ENCODE measurements at regions of chr2 and their contacts with region 1.

Region 1: DNA sequence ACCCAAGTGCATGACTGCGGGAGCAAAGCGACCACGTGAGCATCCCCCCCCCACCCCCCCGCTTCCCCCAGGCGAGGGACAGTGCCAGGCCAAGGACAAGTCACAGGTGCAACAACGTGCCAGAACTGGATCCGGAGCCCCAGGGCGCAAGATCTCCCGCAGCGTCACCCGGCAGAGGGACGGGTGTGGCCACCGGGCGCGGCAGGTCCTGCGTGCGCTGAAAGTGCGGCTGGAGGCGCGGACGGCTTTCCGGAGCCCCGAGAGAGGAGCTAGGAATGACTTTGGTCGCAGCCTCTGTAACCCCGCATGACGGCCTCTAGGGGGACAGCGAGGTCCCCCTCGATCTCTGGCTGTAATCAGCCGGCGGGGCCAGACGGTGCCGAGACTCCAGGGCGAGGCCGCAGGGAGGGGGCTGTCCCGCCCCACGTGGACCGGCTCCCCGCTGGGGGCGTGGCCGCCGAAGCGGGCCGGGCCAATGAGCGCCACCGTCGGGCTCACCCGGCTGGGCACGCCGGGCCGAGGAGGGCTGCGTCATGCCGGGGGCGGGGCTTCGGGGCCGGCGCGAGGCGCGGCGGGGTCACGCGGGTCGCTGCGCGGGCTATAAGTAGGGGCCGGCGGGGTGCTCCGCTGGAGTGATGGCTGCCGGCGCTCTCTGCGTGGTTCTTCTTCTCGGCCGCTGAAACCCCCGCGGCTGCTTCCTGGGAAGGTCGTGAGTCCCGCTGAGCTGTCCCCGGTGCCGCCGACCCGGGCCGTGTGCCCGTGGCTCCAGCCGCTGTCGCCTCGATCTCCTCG is at the start of gene SLC20A1:
- DNase-seq: peak; percentile 93
- H3K4me3 Mint-ChIP-seq: peak within 1 kb of the TSS; percentile 77
- H3K27ac Mint-ChIP-seq: peak within 1 kb of the TSS; percentile 94
- H3K4me1 Mint-ChIP-seq: peaks cover 48% of the 10 kb centered on the region
- H3K27me3 Mint-ChIP-seq: no peaks in the 10 kb centered on the region
- CTCF ChIP-seq: peak; percentile 37
- total RNA-seq, gene SLC20A1: 242 and 295 TPM in 2 replicates

Region 2: GRCh38 chr2:112542123-112542983 is 103.2 kb before region 1 on chr2 and contains the start of gene POLR1B:
- CTCF ChIA-PET with region 1: interaction called, 3 read pairs
- POLR2A ChIA-PET with region 1: interaction called, 3 read pairs
- intact Hi-C with region 1: loop called (anchors 2 kb)
- DNase-seq: peak; percentile 90
- H3K4me3 Mint-ChIP-seq: no peak within 1 kb of the TSS
- H3K27ac Mint-ChIP-seq: no peak within 1 kb of the TSS
- H3K4me1 Mint-ChIP-seq: peaks cover 11% of the 10 kb centered on the region
- H3K27me3 Mint-ChIP-seq: no peaks in the 10 kb centered on the region
- CTCF ChIP-seq: no peak
- total RNA-seq, gene POLR1B: 51.6 and 74.0 TPM in 2 replicates

Region 3: DNA sequence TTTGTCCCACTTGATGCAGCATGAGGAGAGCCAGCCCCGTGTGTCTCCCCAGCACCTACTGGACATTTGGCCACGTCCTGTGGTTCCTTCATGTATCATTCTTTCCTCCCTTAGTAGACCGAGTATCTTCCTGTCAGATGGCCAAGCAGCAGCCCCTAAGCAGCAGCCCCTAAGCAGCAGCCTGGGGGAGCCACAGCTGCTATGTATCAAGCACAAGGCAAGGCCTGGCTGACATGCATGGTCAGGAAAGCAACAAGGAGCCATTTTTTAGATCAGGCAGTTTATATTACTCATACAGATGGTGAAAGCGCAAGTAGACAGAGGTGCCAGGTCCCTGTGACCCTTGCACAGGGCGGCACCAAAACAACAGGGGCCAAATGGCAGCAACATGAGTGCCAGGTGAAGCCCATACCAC is 39.0 kb before region 1 on chr2:
- CTCF ChIA-PET with region 1: interaction called, 4 read pairs
- POLR2A ChIA-PET with region 1: interaction called, 6 read pairs
- intact Hi-C with region 1: loop called (anchors 2 kb)
- DNase-seq: no peak
- H3K4me3 Mint-ChIP-seq: no peak overlapping the region
- H3K27ac Mint-ChIP-seq: no peak overlapping the region
- H3K4me1 Mint-ChIP-seq: peaks cover 4% of the 10 kb centered on the region
- H3K27me3 Mint-ChIP-seq: no peaks in the 10 kb centered on the region
- CTCF ChIP-seq: no peak

Region 4: DNA sequence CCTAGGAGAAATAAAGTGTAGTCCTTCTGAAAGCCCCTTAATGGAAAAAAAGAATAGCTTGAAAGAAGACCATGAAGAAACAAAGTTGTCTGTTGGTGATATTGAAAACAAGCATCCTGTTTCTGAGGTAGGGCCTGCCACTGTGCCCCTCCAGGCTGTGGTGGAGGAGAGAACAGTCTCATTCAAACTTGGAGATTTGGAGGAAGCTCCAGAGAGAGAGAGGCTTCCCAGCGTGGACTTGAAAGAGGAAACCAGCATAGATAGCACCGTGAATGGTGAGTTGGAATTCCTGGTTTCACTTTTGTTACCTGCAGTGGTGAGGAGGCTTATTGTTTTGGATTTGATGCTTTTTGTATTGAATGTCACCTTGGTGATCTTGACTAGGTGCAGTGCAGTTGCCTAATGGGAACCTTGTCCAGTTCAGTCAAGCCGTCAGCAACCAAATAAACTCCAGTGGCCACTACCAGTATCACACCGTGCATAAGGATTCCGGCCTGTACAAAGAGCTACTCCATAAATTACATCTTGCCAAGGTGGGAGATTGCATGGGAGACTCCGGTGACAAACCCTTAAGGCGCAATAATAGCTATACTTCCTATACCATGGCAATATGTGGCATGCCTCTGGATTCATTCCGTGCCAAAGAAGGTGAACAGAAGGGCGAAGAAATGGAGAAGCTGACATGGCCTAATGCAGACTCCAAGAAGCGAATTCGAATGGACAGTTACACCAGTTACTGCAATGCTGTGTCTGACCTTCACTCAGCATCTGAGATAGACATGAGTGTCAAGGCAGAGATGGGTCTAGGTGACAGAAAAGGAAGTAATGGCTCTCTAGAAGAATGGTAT is 13.5 kb after region 1 on chr2:
- CTCF ChIA-PET with region 1: interaction called, 5 read pairs
- POLR2A ChIA-PET with region 1: interaction called, 77 read pairs
- intact Hi-C with region 1: no loop called
- DNase-seq: peak; percentile 49
- H3K4me3 Mint-ChIP-seq: no peak overlapping the region
- H3K27ac Mint-ChIP-seq: peak overlapping the region; percentile 37
- H3K4me1 Mint-ChIP-seq: peaks cover 11% of the 10 kb centered on the region
- H3K27me3 Mint-ChIP-seq: no peaks in the 10 kb centered on the region
- CTCF ChIP-seq: no peak

Region 5: GRCh38 chr2:112679484-112679883 is 34.0 kb after region 1 on chr2:
- CTCF ChIA-PET with region 1: interaction called, 5 read pairs
- POLR2A ChIA-PET with region 1: interaction called, 12 read pairs
- intact Hi-C with region 1: no loop called
- DNase-seq: peak; percentile 80
- H3K4me3 Mint-ChIP-seq: no peak overlapping the region
- H3K27ac Mint-ChIP-seq: peak overlapping the region; percentile 39
- H3K4me1 Mint-ChIP-seq: peaks cover 10% of the 10 kb centered on the region
- H3K27me3 Mint-ChIP-seq: no peaks in the 10 kb centered on the region
- CTCF ChIP-seq: no peak

Region 6: DNA sequence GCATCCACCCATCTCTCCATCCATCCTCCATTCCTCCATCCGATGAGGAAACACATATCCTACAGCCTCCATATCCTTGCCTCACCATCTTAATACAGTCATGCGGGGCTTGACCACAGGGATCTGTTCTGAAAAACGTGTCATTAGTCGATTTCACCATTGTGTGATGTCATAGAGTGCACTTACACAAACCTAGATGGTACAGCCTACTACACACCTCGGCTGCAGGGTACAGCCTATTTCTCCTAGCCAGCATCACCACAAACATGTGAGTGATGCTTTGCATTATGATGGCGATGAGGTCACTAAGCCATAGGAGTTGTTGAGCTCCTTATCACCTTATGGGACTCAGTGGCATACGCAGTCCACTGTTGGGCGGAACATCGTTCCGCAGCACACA is 73.4 kb after region 1 on chr2:
- CTCF ChIA-PET with region 1: no interaction called
- POLR2A ChIA-PET with region 1: no interaction called
- intact Hi-C with region 1: no loop called
- DNase-seq: no peak
- H3K4me3 Mint-ChIP-seq: no peak overlapping the region
- H3K27ac Mint-ChIP-seq: no peak overlapping the region
- H3K4me1 Mint-ChIP-seq: no peaks in the 10 kb centered on the region
- H3K27me3 Mint-ChIP-seq: no peaks in the 10 kb centered on the region
- CTCF ChIP-seq: no peak

Region 7: GRCh38 chr2:113138428-113139322 is 493.2 kb after region 1 on chr2:
- CTCF ChIA-PET with region 1: no interaction called
- POLR2A ChIA-PET with region 1: no interaction called
- intact Hi-C with region 1: no loop called
- DNase-seq: peak; percentile 85
- H3K4me3 Mint-ChIP-seq: no peak overlapping the region
- H3K27ac Mint-ChIP-seq: no peak overlapping the region
- H3K4me1 Mint-ChIP-seq: peaks cover 6% of the 10 kb centered on the region
- H3K27me3 Mint-ChIP-seq: no peaks in the 10 kb centered on the region
- CTCF ChIP-seq: peak; percentile 74